CD8-positive, alpha-beta T cell (primary cell): ENCODE measurements at regions of chr3 and their contacts with region 1.

Region 1: GRCh38 chr3:47035634-47036033 is 56.2 kb downstream of the NBEAL2 start:
- DNase-seq: no peak
- ATAC-seq: no peak
- H3K4me3 ChIP-seq: no peak overlapping the region
- H3K4me3 Mint-ChIP-seq: no peak overlapping the region
- H3K27ac ChIP-seq: no peak overlapping the region
- H3K27ac Mint-ChIP-seq: peak overlapping the region; percentile 66
- H3K4me1 ChIP-seq: peaks cover 27% of the 10 kb centered on the region
- H3K4me1 Mint-ChIP-seq: peaks cover 49% of the 10 kb centered on the region
- H3K27me3 ChIP-seq: no peaks in the 10 kb centered on the region
- H3K27me3 Mint-ChIP-seq: no peaks in the 10 kb centered on the region
- CTCF ChIP-seq: no peak

Region 2: GRCh38 chr3:47009225-47010110 is 26.2 kb before region 1 on chr3:
- CTCF ChIA-PET with region 1: no interaction called
- POLR2A ChIA-PET with region 1: no interaction called
- intact Hi-C with region 1: loop called in 1 of 2 experiments (anchors 1 kb)
- DNase-seq: peak; percentile 43 to 92 (median 86)
- ATAC-seq: peak; percentile 91
- H3K4me3 ChIP-seq: peak overlapping the region; percentile 52 to 66
- H3K4me3 Mint-ChIP-seq: peak overlapping the region; percentile 70
- H3K27ac ChIP-seq: peak overlapping the region; percentile 56 to 64
- H3K27ac Mint-ChIP-seq: peak overlapping the region; percentile 83
- H3K4me1 ChIP-seq: peaks cover 8% of the 10 kb centered on the region
- H3K4me1 Mint-ChIP-seq: peaks cover 8% of the 10 kb centered on the region
- H3K27me3 ChIP-seq: no peaks in the 10 kb centered on the region
- H3K27me3 Mint-ChIP-seq: no peaks in the 10 kb centered on the region
- CTCF ChIP-seq: no peak

Region 3: GRCh38 chr3:47057212-47057671 is 21.6 kb after region 1 on chr3:
- CTCF ChIA-PET with region 1: no interaction called
- POLR2A ChIA-PET with region 1: interaction called, 3 read pairs
- intact Hi-C with region 1: loop called (anchors 1 to 2 kb)
- DNase-seq: peak in 8 of 9 experiments; percentile 7 to 88 (median 56)
- ATAC-seq: peak; percentile 88
- H3K4me3 ChIP-seq: no peak overlapping the region
- H3K4me3 Mint-ChIP-seq: peak overlapping the region; percentile 7
- H3K27ac ChIP-seq: peak overlapping the region; percentile 7 to 55
- H3K27ac Mint-ChIP-seq: peak overlapping the region; percentile 92
- H3K4me1 ChIP-seq: peaks cover 15% of the 10 kb centered on the region
- H3K4me1 Mint-ChIP-seq: peaks cover 39% of the 10 kb centered on the region
- H3K27me3 ChIP-seq: no peaks in the 10 kb centered on the region
- H3K27me3 Mint-ChIP-seq: no peaks in the 10 kb centered on the region
- CTCF ChIP-seq: no peak

Region 4: GRCh38 chr3:47065681-47066080 is 30.0 kb after region 1 on chr3:
- CTCF ChIA-PET with region 1: interaction called, 3 read pairs
- POLR2A ChIA-PET with region 1: no interaction called
- intact Hi-C with region 1: loop called in 1 of 2 experiments (anchors 5 kb)
- DNase-seq: no peak
- ATAC-seq: no peak
- H3K4me3 ChIP-seq: no peak overlapping the region
- H3K4me3 Mint-ChIP-seq: no peak overlapping the region
- H3K27ac ChIP-seq: no peak overlapping the region
- H3K27ac Mint-ChIP-seq: no peak overlapping the region
- H3K4me1 ChIP-seq: no peaks in the 10 kb centered on the region
- H3K4me1 Mint-ChIP-seq: peaks cover 15% of the 10 kb centered on the region
- H3K27me3 ChIP-seq: no peaks in the 10 kb centered on the region
- H3K27me3 Mint-ChIP-seq: no peaks in the 10 kb centered on the region
- CTCF ChIP-seq: no peak

Region 5: DNA sequence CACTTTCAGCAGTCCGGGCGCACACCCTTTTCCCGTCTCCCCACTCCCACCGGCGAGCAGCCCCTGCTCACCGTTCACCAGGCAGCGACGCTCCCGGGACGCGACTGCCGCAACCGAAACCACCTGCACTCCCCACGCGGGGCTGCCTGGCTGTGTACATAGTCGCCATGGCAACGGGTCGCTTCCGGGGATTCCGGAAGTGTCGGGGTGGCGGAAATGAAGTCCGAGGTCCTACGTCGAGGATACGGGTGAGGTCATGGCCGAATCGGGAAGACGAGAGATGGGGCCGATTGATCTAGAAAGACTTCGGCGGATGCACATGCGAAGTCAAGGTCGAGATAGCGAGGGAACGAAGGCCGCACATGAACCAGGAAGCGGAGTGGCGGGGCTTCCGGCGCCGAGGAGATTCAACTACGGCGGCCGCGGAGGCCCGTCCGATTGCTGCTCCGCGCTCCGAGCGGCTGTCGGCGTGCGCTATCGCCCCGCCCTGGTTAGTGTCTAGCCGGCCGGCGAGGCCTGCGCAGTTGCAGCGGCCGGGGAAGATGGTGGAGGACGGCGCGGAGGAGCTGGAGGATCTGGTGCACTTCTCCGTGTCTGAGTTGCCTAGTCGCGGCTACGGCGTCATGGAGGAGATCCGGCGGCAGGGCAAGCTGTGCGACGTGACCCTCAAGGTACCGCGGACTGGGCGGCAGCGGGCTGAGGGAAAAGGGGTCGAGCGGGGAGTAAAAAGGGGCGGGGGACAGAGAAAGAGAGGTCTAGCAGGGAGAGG is 247.0 kb after region 1 on chr3 and contains the starts of genes KIF9 and KLHL18:
- CTCF ChIA-PET with region 1: no interaction called
- POLR2A ChIA-PET with region 1: no interaction called
- intact Hi-C with region 1: loop called in 1 of 2 experiments (anchors 1 kb)
- DNase-seq: peak; percentile 92 to 99 (median 96)
- ATAC-seq: peak; percentile 86
- H3K4me3 ChIP-seq: peak within 1 kb of the TSS; percentile 75 to 79
- H3K4me3 Mint-ChIP-seq: peak within 1 kb of the TSS; percentile 97
- H3K27ac ChIP-seq: peak within 1 kb of the TSS; percentile 98 to 99
- H3K27ac Mint-ChIP-seq: peak within 1 kb of the TSS; percentile 99
- H3K4me1 ChIP-seq: peaks cover 32% of the 10 kb centered on the region
- H3K4me1 Mint-ChIP-seq: peaks cover 40% of the 10 kb centered on the region
- H3K27me3 ChIP-seq: no peaks in the 10 kb centered on the region
- H3K27me3 Mint-ChIP-seq: no peaks in the 10 kb centered on the region
- CTCF ChIP-seq: no peak
- total RNA-seq, gene KIF9: 11.7 to 12.2 TPM
- total RNA-seq, gene KLHL18: 61.6 to 62.8 TPM